ENCODE measurements at regions of chr2 and their contacts with region 1.

Region 1: DNA sequence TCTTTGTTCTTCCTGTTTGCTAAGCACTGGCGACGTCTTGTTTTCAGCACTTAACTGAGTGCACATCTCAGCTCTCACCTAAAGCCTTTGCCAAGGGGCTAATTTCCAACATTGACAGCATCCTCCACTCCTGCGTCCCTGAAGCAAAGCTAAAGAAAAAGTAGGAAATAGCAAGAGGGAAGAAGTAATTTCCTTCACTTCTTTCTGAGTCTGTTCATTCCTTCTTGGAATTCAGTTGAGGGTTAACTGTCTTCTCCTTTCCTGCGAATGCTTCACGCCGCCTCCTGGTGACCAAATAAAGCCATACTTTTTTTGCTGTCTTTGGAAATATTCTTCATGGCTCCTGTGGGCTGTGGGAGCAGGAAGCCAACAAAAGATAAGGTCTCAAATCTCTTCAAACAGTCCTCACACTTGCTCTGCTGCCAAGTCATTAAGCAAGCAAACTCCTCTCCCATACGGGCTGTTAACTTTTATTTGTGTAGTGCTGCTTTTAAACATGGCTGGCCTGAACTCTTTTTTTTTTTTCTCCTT is 100.9 kb downstream of the DPP10 start:
- DNase-seq: peak in 1 of 2 donors; percentile 67
- H3K4me3 ChIP-seq: peak overlapping the region; percentile 11 to 39
- H3K27ac ChIP-seq: peak overlapping the region; percentile 69 to 71
- H3K4me1 ChIP-seq: peaks cover 0 to 2% of the 10 kb centered on the region in 2 donors
- H3K27me3 ChIP-seq: no peaks in the 10 kb centered on the region
- CTCF ChIP-seq: peak; percentile 23 to 50 (median 32)

Region 2: GRCh38 chr2:113889471-113890252 is 653.6 kb before region 1 on chr2 and contains the start of gene ACTR3:
- intact Hi-C with region 1: loop called (anchors 10 kb)
- DNase-seq: peak; percentile 91 to 99
- H3K4me3 ChIP-seq: peak within 1 kb of the TSS; percentile 94 to 95
- H3K27ac ChIP-seq: peak within 1 kb of the TSS; percentile 99 to 100
- H3K4me1 ChIP-seq: peaks cover 0 to 27% of the 10 kb centered on the region in 2 donors
- H3K27me3 ChIP-seq: no peaks in the 10 kb centered on the region
- CTCF ChIP-seq: peak in 1 of 3 experiments; percentile 2
- total RNA-seq, gene ACTR3: 45.4 TPM

Region 3: GRCh38 chr2:114219456-114220014 is 323.8 kb before region 1 on chr2:
- intact Hi-C with region 1: no loop called
- DNase-seq: no peak
- H3K4me3 ChIP-seq: no peak overlapping the region
- H3K27ac ChIP-seq: no peak overlapping the region
- H3K4me1 ChIP-seq: no peaks in the 10 kb centered on the region
- H3K27me3 ChIP-seq: no peaks in the 10 kb centered on the region
- CTCF ChIP-seq: no peak

Region 4: DNA sequence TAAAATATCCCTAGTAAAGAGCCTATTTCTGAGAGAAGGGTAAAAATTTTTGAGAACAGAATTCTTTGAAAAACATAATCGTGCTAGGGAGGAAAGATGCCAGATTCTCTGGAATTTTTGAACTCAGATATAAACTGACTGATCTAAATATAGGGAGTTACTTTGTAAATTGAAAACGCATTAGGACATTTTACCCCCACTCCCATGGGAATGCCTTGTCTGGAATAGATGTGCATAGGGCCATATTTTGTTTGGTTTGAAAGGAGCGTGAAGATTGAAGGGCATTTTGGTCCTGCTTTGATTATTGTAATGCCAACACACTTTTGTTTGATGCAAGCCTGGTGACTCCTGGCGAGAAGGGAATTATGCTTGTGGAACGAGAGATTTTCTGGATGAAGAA is 259.5 kb before region 1 on chr2:
- intact Hi-C with region 1: loop called (anchors 1 kb)
- DNase-seq: no peak
- H3K4me3 ChIP-seq: no peak overlapping the region
- H3K27ac ChIP-seq: peak overlapping the region; percentile 68 to 79
- H3K4me1 ChIP-seq: peaks cover 0 to 10% of the 10 kb centered on the region in 2 donors
- H3K27me3 ChIP-seq: no peaks in the 10 kb centered on the region
- CTCF ChIP-seq: no peak

Region 5: DNA sequence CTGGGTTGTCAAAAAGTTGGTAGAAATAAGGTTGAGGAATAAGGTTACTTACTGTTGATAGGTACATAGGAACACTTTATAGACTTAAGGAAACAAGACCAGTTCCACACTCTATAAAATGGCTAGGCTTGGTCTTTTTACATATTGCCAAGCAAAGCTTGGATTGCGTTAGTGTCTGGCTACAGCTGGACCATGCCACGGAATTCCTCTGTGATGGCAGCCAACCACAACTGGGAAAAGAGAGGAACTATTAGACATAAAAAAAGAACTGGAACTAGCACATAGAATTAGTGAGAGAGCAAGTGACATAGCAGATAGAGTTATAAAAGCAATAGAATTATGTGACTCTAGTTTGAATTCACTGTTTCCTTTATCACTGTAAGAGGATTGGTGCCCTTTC is 118.6 kb before region 1 on chr2:
- intact Hi-C with region 1: loop called (anchors 5 kb)
- DNase-seq: peak in 1 of 2 donors; percentile 67
- H3K4me3 ChIP-seq: no peak overlapping the region
- H3K27ac ChIP-seq: peak overlapping the region; percentile 76 to 81
- H3K4me1 ChIP-seq: peaks cover 7 to 10% of the 10 kb centered on the region in 2 donors
- H3K27me3 ChIP-seq: no peaks in the 10 kb centered on the region
- CTCF ChIP-seq: no peak